Activated T-helper 1 cell treated with anti-CD3 and anti-CD28 coated beads, Interleukin-12 subunit alpha, Interleukin-12 subunit beta, Interleukin-2, Interleukin-4 antibody, amounts not matched to agents 30 ng/mL and 10 ng/mL and 1 ng/mL, durations not matched to agents 14 hours and 24 hours and 36 hours (primary cell): ENCODE measurements at regions of chrX and their contacts with region 1.

Region 1: DNA sequence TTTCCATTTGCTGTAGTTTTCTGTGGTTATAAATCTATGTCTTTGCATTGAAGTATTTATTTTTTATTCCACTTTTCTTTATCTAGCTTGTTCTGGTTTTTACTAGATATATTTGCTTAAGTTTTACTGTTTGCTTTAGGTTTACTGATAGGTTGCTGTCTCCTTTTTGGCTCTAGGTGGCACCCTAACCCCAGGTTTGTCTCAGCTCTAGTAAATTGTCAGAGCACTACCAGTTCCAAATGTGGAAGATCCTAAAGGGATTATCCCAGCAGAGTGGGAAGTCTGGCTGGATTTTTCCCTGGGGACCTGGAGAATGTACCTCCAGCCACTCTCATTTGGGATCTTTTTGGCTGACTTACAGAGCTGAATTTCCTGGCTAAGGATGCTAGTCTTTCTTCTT is 106.1 kb downstream of the PBDC1 start:
- DNase-seq: peak; percentile 2
- H3K4me3 Mint-ChIP-seq: no peak overlapping the region
- H3K27ac Mint-ChIP-seq: no peak overlapping the region
- H3K4me1 Mint-ChIP-seq: no peaks in the 10 kb centered on the region
- H3K27me3 Mint-ChIP-seq: no peaks in the 10 kb centered on the region

Region 2: GRCh38 chrX:75887833-75888232 is 391.2 kb before region 1 on chrX:
- intact Hi-C with region 1: no loop called
- DNase-seq: no peak
- H3K4me3 Mint-ChIP-seq: no peak overlapping the region
- H3K27ac Mint-ChIP-seq: no peak overlapping the region
- H3K4me1 Mint-ChIP-seq: no peaks in the 10 kb centered on the region
- H3K27me3 Mint-ChIP-seq: no peaks in the 10 kb centered on the region

Region 3: DNA sequence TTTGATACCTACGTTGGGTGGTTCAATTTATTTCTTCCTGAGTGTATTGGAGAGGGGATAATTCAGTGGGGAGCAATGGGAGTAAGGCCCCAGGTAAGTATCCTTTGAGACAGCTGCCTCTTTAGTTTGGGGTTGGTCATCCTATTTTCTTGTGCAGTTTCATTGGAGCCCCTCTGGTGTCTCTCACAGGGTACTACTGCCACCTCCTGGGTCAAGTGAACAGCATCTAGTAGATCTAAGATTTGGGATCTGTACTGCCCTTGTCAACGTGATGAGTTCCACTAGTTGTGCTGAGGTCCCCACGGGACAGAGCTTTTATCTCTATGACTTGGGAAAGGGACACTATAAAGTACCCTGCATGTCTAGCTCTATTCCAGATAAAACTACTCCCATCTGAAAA is 25.6 kb before region 1 on chrX:
- intact Hi-C with region 1: no loop called
- DNase-seq: peak; percentile 1
- H3K4me3 Mint-ChIP-seq: no peak overlapping the region
- H3K27ac Mint-ChIP-seq: no peak overlapping the region
- H3K4me1 Mint-ChIP-seq: no peaks in the 10 kb centered on the region
- H3K27me3 Mint-ChIP-seq: peaks cover 2% of the 10 kb centered on the region

Region 4: GRCh38 chrX:76454456-76454927 is 175.5 kb after region 1 on chrX:
- intact Hi-C with region 1: loop called (anchors 1 kb)
- DNase-seq: no peak
- H3K4me3 Mint-ChIP-seq: no peak overlapping the region
- H3K27ac Mint-ChIP-seq: no peak overlapping the region
- H3K4me1 Mint-ChIP-seq: no peaks in the 10 kb centered on the region
- H3K27me3 Mint-ChIP-seq: no peaks in the 10 kb centered on the region